ENCODE measurements at regions of chr3 and their contacts with region 1.

Region 1: GRCh38 chr3:45607790-45608189 is 13.2 kb downstream of the LIMD1 start:
- DNase-seq: no peak
- H3K4me3 ChIP-seq: peak overlapping the region; percentile 16 to 51
- H3K27ac ChIP-seq: peak overlapping the region; percentile 88 to 91
- H3K4me1 ChIP-seq: peaks cover 53 to 79% of the 10 kb centered on the region in 2 donors
- H3K27me3 ChIP-seq: no peaks in the 10 kb centered on the region
- CTCF ChIP-seq: no peak

Region 2: GRCh38 chr3:45644063-45644790 is 36.4 kb after region 1 on chr3:
- intact Hi-C with region 1: loop called (anchors 2 kb)
- DNase-seq: no peak
- H3K4me3 ChIP-seq: no peak overlapping the region
- H3K27ac ChIP-seq: peak overlapping the region; percentile 91 to 94
- H3K4me1 ChIP-seq: peaks cover 20 to 46% of the 10 kb centered on the region in 2 donors
- H3K27me3 ChIP-seq: no peaks in the 10 kb centered on the region
- CTCF ChIP-seq: no peak